ENCODE measurements at regions of chr7 and their contacts with region 1.

Region 1: DNA sequence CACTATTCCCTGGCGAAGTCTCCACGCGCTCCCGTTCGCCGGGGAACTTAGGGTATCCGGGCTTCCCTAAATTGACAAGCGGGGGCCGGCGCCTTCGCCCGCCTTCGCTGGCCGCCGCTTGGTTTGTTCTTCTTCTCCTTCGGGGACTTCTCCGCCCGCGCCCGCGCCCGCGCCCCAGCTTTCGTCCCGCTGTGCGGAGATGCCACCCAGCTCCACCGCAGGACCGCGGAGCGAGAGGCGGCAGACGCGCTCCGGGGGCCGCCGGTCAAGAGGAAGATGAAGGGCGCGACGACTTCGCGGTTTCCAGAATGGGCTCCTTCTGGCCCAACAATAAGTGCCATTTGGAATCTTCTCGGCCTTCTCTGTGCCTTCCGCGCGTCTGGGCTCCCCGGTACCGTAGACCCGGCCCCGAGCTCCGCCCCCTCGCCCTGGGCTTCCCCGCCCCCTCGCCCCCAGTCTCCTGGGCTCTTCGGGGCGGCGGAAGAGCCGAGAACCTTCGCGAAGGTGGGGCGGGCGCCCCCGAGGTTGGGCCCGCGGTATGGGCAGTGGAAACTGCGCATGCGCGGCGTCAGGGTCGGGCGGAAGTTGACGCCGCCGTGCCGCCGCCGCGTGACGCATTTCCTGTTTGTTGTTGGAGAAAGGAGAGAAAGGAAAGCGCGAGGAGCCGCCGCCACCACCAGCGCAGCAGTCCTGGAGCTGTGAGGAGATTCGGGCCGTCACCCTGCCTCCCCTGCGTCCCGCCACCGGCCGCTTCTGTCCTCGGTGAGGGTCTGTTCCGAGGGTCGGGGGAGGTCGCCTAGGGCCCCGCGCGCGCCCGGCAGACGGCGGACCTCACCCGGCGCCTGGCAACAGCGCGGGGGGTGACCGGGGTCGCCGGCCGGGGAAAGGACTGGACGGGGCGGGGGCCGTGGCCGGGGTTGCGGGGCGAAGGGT is at the start of gene DNAJB6:
- DNase-seq: peak; percentile 94
- H3K4me3 ChIP-seq: peak within 1 kb of the TSS; percentile 42
- H3K27ac ChIP-seq: peak within 1 kb of the TSS; percentile 67
- H3K4me1 ChIP-seq: peaks cover 10% of the 10 kb centered on the region
- H3K27me3 ChIP-seq: no peaks in the 10 kb centered on the region
- CTCF ChIP-seq: no peak
- total RNA-seq, gene DNAJB6: 78.0 to 81.8 TPM

Region 2: DNA sequence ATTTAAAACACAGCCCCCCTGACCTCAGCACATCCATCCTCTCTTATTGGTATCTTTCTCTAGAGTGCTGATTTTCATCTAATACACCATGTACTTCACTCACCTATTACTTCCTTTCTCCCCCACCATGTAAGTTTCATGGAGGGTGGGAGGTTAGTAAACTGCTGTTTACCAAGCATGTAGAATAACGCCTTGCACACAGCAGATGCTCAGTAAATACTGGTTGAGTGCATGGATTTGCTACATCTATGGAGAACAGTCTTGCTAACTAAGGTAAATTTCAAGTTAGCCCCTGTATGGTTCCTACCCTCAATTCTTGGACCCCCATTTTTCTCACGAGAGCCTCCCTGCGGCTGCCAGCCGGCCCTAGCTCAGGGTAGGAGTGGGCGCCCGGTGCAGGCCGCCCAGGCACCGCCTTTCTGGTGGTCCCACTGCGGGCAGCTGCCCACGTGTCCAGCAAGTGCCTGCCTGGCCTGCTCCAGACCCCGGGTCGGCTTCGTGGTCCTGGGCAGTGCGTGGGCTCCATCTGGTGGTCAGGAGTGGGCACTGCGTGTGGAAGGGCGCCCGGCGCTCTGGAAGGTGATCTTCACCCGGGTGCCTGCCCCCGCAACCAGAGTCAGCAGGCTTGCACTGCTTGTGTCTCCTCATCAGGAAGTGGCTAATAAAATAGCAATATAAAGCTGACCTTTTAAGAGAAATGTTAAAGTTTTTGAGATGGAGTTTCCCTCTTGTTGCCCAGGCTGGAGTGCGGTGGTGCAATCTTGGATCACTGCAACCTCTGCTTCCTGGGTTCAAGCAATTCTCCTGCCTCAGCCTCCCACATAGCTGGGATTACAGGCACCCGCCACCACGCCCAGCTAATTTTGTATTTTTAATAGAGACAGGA is 63.2 kb before region 1 on chr7:
- intact Hi-C with region 1: loop called (anchors 10 kb)
- DNase-seq: peak; percentile 63
- H3K4me3 ChIP-seq: no peak overlapping the region
- H3K27ac ChIP-seq: no peak overlapping the region
- H3K4me1 ChIP-seq: peaks cover 10% of the 10 kb centered on the region
- H3K27me3 ChIP-seq: no peaks in the 10 kb centered on the region
- CTCF ChIP-seq: peak; percentile 98